ENCODE measurements at regions of chr20 and their contacts with region 1.

Region 1: GRCh38 chr20:822651-823573 is 10.6 kb upstream of the FAM110A start:
- DNase-seq: peak; percentile 40
- ATAC-seq: no peak

Region 2: DNA sequence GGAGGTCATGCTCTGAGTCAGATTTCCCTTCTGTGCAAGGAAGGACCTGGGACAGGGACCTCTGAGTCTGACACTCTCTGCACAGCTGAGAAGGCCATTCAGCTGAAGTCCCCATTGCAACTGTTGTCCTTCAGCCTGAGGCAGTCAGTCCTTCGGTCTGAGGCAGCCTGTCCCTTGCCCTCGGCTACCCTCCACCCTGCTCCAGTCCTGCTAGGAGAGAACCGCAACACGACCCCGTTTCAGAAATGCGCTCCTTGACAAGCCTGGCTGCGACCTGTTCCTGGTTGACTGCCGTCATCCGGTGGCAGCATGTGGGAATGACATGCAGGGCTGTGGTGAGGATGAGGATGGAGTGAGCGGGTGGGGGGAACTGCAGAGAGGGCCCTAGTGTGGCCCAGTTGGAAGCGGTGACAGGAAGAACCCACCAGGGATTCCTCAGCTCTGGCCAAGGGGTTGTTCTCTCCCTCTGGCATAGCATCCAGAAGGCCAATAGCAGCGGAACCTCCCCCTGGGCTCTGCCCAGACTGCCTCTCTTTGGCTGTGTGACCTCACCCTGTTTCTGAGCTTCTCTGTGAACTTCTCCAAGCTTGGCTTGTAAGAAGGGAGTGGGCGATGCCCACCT is 133.5 kb after region 1 on chr20:
- intact Hi-C with region 1: loop called (anchors 5 kb)
- DNase-seq: peak; percentile 80
- ATAC-seq: peak; percentile 84

Measured in sciatic nerve (tissue), 2 donors.